ENCODE measurements at regions of chr22 and their contacts with region 1.

Region 1: GRCh38 chr22:41940832-41941765 is 5.9 kb downstream of the CENPM start:
- DNase-seq: peak; percentile 72 to 89 (median 85)
- ATAC-seq: peak; percentile 74
- H3K4me3 ChIP-seq: peak overlapping the region; percentile 16
- H3K4me3 Mint-ChIP-seq: peak overlapping the region; percentile 57 to 91 (median 82)
- H3K27ac ChIP-seq: peak overlapping the region; percentile 92
- H3K27ac Mint-ChIP-seq: peak overlapping the region; percentile 96 to 100 (median 100)
- H3K4me1 ChIP-seq: peaks cover 20 to 31% of the 10 kb centered on the region in 2 donors
- H3K4me1 Mint-ChIP-seq: peaks cover 25 to 55% (median 31%) of the 10 kb centered on the region in 7 donors
- H3K27me3 ChIP-seq: no peaks in the 10 kb centered on the region
- H3K27me3 Mint-ChIP-seq: peaks cover 0 to 2% (median 0%) of the 10 kb centered on the region in 5 donors

Region 2: GRCh38 chr22:41229730-41230400 is 711.2 kb before region 1 on chr22:
- CTCF ChIA-PET with region 1: no interaction called
- POLR2A ChIA-PET with region 1: no interaction called
- intact Hi-C with region 1: no loop called
- DNase-seq: no peak
- ATAC-seq: no peak
- H3K4me3 ChIP-seq: no peak overlapping the region
- H3K4me3 Mint-ChIP-seq: no peak overlapping the region
- H3K27ac ChIP-seq: no peak overlapping the region
- H3K27ac Mint-ChIP-seq: peak overlapping the region in 1 of 9 donors; percentile 49
- H3K4me1 ChIP-seq: no peaks in the 10 kb centered on the region
- H3K4me1 Mint-ChIP-seq: peaks cover 0 to 3% (median 0%) of the 10 kb centered on the region in 7 donors
- H3K27me3 ChIP-seq: no peaks in the 10 kb centered on the region
- H3K27me3 Mint-ChIP-seq: no peaks in the 10 kb centered on the region

Region 3: DNA sequence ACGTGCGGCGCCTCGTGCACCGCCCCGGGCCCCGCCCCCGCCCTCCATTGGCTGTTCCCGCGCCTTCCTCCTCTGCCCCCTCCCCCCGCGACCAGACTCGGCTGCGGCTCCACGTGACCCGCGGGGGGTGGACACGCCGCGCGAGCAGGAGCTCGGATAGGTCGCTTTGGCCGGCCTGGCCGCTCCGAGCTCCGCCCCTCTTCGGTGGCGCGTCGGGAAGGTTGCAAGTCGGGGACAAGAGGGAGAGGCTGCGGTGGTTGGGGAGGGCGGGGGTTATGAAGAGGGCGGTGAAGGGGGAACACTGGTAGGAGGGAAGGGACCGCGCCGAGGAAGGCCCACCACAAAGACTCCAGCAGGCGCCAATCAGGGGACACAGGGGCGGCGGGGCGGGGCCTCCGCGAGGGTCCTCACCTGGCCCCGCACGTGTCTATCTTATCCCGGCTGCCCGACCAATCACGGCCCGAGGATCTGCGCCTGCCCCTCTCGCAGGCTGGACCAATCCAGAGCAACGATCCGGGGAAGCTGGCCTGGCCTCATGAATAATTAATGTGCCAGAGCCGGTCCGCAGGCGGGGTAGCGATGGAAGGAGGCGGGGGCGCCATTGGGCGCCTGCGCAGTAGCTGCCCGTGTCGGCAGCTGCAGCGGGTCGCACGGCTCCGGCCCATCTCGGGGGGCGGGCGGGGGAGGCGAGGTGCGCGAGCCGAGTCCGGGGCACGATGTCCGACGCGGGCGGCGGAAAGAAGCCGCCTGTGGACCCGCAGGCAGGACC is 559.6 kb before region 1 on chr22 and contains the start of gene TEF:
- CTCF ChIA-PET with region 1: no interaction called
- POLR2A ChIA-PET with region 1: no interaction called
- intact Hi-C with region 1: loop called in 1 of 2 experiments (anchors 2 kb)
- DNase-seq: peak; percentile 97 to 99 (median 98)
- ATAC-seq: peak; percentile 89
- H3K4me3 ChIP-seq: peak within 1 kb of the TSS; percentile 86
- H3K4me3 Mint-ChIP-seq: peak within 1 kb of the TSS; percentile 90 to 97 (median 94)
- H3K27ac ChIP-seq: peak within 1 kb of the TSS; percentile 95
- H3K27ac Mint-ChIP-seq: peak within 1 kb of the TSS; percentile 94 to 99 (median 98)
- H3K4me1 ChIP-seq: peaks cover 5 to 14% of the 10 kb centered on the region in 2 donors
- H3K4me1 Mint-ChIP-seq: peaks cover 5 to 29% (median 19%) of the 10 kb centered on the region in 7 donors
- H3K27me3 ChIP-seq: no peaks in the 10 kb centered on the region
- H3K27me3 Mint-ChIP-seq: peaks cover 0 to 5% (median 0%) of the 10 kb centered on the region in 5 donors
- total RNA-seq, gene TEF: 3.8 to 8.4 (median 6.2) TPM

Region 4: GRCh38 chr22:41688365-41689211 is 252.5 kb before region 1 on chr22 and contains the start of gene SNU13:
- CTCF ChIA-PET with region 1: interaction called, 4 read pairs
- POLR2A ChIA-PET with region 1: interaction called, 14 read pairs
- intact Hi-C with region 1: loop called (anchors 2 kb)
- DNase-seq: peak; percentile 79 to 94 (median 92)
- ATAC-seq: peak; percentile 97
- H3K4me3 ChIP-seq: peak within 1 kb of the TSS; percentile 98
- H3K4me3 Mint-ChIP-seq: peak within 1 kb of the TSS; percentile 90 to 100 (median 96)
- H3K27ac ChIP-seq: peak within 1 kb of the TSS; percentile 95
- H3K27ac Mint-ChIP-seq: peak within 1 kb of the TSS; percentile 94 to 100 (median 99)
- H3K4me1 ChIP-seq: peaks cover 12 to 13% of the 10 kb centered on the region in 2 donors
- H3K4me1 Mint-ChIP-seq: peaks cover 18 to 51% (median 37%) of the 10 kb centered on the region in 7 donors
- H3K27me3 ChIP-seq: no peaks in the 10 kb centered on the region
- H3K27me3 Mint-ChIP-seq: no peaks in the 10 kb centered on the region
- total RNA-seq, gene SNU13: 117 to 180 (median 122) TPM

Region 5: DNA sequence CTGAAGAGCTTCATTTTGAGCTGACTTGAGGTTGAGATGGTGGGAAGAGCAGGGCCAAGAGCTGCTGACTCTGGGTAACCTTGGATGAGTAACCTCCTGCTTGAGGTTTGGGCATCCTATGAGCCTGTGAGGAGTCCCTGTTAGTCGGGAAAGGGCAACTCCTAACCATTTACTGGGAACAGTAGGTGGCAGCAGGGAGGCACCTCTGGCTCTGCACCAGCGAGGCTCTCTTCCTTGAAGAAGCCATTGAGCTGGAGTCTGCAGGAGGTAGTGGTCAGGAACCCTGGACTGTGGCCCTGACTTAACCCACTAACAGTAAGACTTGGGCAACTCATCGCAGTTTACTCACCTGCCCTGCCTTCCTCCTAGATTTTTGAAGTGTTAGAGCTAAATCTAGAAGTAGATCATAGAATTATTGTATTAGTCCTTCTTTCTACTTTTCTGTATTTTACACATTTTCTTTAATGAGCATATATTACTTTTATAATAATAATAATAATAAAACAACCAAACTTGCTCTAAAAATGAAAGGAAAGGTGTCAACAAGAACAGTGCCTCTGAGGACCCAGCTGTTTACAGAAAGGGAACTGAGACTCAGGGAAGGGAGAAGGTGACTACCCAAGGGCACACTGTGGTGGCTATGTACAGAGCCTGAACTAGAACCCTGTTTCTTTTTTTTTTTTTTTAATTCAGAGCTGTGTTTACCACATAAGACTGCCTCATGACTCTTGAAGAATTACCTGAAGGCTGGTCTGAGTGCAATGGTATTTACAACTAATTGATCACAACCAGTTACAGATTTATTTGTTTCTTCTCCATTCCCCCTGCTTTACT is 194.3 kb before region 1 on chr22:
- CTCF ChIA-PET with region 1: interaction called, 41 read pairs
- POLR2A ChIA-PET with region 1: interaction called, 10 read pairs
- intact Hi-C with region 1: loop called in 1 of 2 experiments (anchors 1 kb)
- DNase-seq: peak; percentile 23 to 65 (median 52)
- ATAC-seq: peak; percentile 92
- H3K4me3 ChIP-seq: no peak overlapping the region
- H3K4me3 Mint-ChIP-seq: no peak overlapping the region
- H3K27ac ChIP-seq: no peak overlapping the region
- H3K27ac Mint-ChIP-seq: peak overlapping the region in 2 of 9 donors; percentile 2 to 36
- H3K4me1 ChIP-seq: no peaks in the 10 kb centered on the region
- H3K4me1 Mint-ChIP-seq: peaks cover 0 to 6% (median 0%) of the 10 kb centered on the region in 7 donors
- H3K27me3 ChIP-seq: no peaks in the 10 kb centered on the region
- H3K27me3 Mint-ChIP-seq: peaks cover 0 to 48% (median 0%) of the 10 kb centered on the region in 5 donors

Region 6: GRCh38 chr22:41800348-41801146 is 140.6 kb before region 1 on chr22 and contains the start of gene CCDC134:
- CTCF ChIA-PET with region 1: interaction called, 4 read pairs
- POLR2A ChIA-PET with region 1: interaction called, 17 read pairs
- intact Hi-C with region 1: loop called in 1 of 2 experiments (anchors 1 kb)
- DNase-seq: peak; percentile 87 to 94 (median 92)
- ATAC-seq: peak; percentile 99
- H3K4me3 ChIP-seq: peak within 1 kb of the TSS; percentile 88
- H3K4me3 Mint-ChIP-seq: peak within 1 kb of the TSS; percentile 81 to 97 (median 95)
- H3K27ac ChIP-seq: peak within 1 kb of the TSS; percentile 88
- H3K27ac Mint-ChIP-seq: peak within 1 kb of the TSS; percentile 94 to 100 (median 98)
- H3K4me1 ChIP-seq: peaks cover 17 to 19% of the 10 kb centered on the region in 2 donors
- H3K4me1 Mint-ChIP-seq: peaks cover 8 to 49% (median 41%) of the 10 kb centered on the region in 7 donors
- H3K27me3 ChIP-seq: no peaks in the 10 kb centered on the region
- H3K27me3 Mint-ChIP-seq: no peaks in the 10 kb centered on the region
- total RNA-seq, gene CCDC134: 13.7 to 22.8 (median 18.2) TPM

Region 7: DNA sequence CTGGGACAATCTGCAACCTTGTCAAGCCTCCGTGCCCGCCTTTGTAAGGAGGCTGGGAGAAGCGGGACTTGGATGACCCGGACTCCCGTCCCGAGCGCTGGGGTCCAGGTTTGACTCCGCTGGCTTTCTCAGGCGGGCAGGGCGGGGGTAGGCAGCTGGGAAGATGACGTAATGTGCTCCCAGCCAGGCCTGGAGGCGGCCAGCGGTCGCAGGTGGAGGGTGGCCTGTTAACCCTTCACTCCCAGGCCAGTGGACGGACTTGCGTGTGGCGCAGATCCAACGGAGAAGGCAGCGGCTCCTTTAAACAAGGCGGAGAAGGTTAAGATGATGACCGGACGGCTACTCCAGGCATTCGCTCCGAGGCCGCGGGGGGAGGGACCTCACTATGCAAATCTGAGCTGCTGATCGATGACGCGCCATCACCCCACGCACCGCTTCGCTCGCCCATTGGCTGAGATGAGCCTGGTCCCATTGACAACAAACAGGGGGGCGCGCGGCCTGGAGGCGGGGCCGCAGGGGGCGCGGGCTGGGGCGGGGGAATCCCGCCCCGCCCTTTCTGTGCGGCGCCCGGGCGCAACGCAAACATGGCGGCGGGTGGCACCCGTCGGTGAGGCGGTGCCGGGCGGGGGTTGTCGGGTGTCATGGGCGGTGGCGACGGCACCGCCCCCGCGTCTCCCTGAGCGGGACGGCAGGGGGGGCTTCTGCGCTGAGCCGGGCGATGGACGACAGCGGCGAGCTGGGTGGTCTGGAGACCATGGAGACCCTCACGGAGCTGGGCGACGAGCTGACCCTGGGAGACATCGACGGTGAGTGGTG is 108.3 kb before region 1 on chr22 and contains the start of gene SREBF2:
- CTCF ChIA-PET with region 1: interaction called, 12 read pairs
- POLR2A ChIA-PET with region 1: interaction called, 61 read pairs
- intact Hi-C with region 1: loop called (anchors 1 to 2 kb)
- DNase-seq: peak; percentile 93 to 99 (median 97)
- ATAC-seq: peak; percentile 96
- H3K4me3 ChIP-seq: peak within 1 kb of the TSS; percentile 99
- H3K4me3 Mint-ChIP-seq: peak within 1 kb of the TSS; percentile 90 to 98 (median 95)
- H3K27ac ChIP-seq: peak within 1 kb of the TSS; percentile 97
- H3K27ac Mint-ChIP-seq: peak within 1 kb of the TSS; percentile 94 to 100 (median 99)
- H3K4me1 ChIP-seq: peaks cover 0 to 10% of the 10 kb centered on the region in 2 donors
- H3K4me1 Mint-ChIP-seq: peaks cover 15 to 54% (median 30%) of the 10 kb centered on the region in 7 donors
- H3K27me3 ChIP-seq: no peaks in the 10 kb centered on the region
- H3K27me3 Mint-ChIP-seq: peaks cover 0 to 2% (median 0%) of the 10 kb centered on the region in 5 donors
- total RNA-seq, gene SREBF2: 71.5 to 117 (median 101) TPM

Region 8: GRCh38 chr22:41915035-41915785 is 25.9 kb before region 1 on chr22 and contains the start of gene SHISA8:
- CTCF ChIA-PET with region 1: interaction called, 4 read pairs
- POLR2A ChIA-PET with region 1: interaction called, 6 read pairs
- intact Hi-C with region 1: loop called (anchors 1 to 2 kb)
- DNase-seq: peak in 8 of 9 donors; percentile 41 to 72 (median 63)
- ATAC-seq: peak; percentile 70
- H3K4me3 ChIP-seq: peak within 1 kb of the TSS; percentile 41
- H3K4me3 Mint-ChIP-seq: peak within 1 kb of the TSS; percentile 44 to 83 (median 62)
- H3K27ac ChIP-seq: no peak within 1 kb of the TSS
- H3K27ac Mint-ChIP-seq: peak within 1 kb of the TSS in 3 of 9 donors; percentile 18 to 36 (median 33)
- H3K4me1 ChIP-seq: peaks cover 6 to 14% of the 10 kb centered on the region in 2 donors
- H3K4me1 Mint-ChIP-seq: peaks cover 4 to 28% (median 23%) of the 10 kb centered on the region in 7 donors
- H3K27me3 ChIP-seq: peaks cover 7 to 17% of the 10 kb centered on the region in 2 donors
- H3K27me3 Mint-ChIP-seq: peaks cover 25 to 58% (median 34%) of the 10 kb centered on the region in 5 donors
- total RNA-seq, gene SHISA8: 0.34 to 0.58 (median 0.54) TPM in 3 of 5 experiments, not detected in the others

Region 9: GRCh38 chr22:42016101-42016500 is 75.0 kb after region 1 on chr22:
- CTCF ChIA-PET with region 1: no interaction called
- POLR2A ChIA-PET with region 1: no interaction called
- intact Hi-C with region 1: no loop called
- DNase-seq: no peak
- ATAC-seq: no peak
- H3K4me3 ChIP-seq: no peak overlapping the region
- H3K4me3 Mint-ChIP-seq: no peak overlapping the region
- H3K27ac ChIP-seq: no peak overlapping the region
- H3K27ac Mint-ChIP-seq: no peak overlapping the region
- H3K4me1 ChIP-seq: no peaks in the 10 kb centered on the region
- H3K4me1 Mint-ChIP-seq: peaks cover 0 to 4% (median 0%) of the 10 kb centered on the region in 7 donors
- H3K27me3 ChIP-seq: no peaks in the 10 kb centered on the region
- H3K27me3 Mint-ChIP-seq: peaks cover 6 to 25% (median 16%) of the 10 kb centered on the region in 5 donors

Measured in naive thymus-derived CD4-positive, alpha-beta T cell (primary cell).